GM18951 (cell line): ENCODE measurements at regions of chr6 and their contacts with region 1.

Region 1: DNA sequence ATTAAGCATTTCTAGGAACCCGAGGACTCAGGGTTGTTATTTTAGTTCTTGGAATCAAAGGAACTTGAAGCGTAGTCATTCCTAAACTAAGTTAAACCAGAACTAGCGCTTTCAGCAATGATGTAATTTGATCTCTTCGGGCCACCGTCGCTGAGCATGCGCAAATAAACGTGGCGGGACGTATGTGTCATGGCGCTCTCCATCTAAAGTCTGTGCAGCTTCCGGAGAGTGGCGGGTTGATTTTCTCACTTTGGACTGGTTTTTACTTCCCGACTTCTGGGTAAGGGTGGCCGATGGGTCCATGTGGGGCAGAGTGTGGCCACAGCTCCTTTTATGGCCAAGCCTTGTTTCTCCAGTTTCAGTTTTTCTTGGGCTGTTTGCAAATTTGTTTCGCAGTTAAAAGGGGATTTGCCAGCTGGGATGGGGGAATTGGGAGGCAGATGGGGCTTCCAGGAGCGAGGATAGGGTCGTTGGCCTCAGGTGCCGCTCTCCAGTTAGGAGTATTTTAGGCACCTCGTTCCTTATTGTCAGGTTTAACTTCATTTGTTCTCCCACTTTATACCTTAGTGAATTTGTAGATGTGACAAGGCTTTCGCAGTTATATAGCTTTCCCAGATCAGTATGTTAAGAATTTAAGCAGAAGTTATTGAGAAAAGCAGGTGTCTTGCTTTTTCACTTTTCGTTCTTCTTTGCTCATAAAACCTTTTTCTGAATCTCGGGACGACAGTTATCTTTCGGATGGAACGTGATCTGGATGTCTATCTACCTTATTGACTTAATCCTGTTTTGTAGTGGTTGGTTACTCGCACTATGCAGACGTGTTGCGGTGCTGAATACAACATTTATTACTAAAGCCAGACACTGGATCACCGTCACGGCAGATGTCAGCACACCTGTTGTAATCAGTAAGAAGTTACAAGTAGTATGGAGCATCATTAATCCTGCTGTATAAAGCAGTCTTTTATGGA is at the start of gene CDKAL1:
- POLR2A ChIP-seq: peak; percentile 71

Region 2: DNA sequence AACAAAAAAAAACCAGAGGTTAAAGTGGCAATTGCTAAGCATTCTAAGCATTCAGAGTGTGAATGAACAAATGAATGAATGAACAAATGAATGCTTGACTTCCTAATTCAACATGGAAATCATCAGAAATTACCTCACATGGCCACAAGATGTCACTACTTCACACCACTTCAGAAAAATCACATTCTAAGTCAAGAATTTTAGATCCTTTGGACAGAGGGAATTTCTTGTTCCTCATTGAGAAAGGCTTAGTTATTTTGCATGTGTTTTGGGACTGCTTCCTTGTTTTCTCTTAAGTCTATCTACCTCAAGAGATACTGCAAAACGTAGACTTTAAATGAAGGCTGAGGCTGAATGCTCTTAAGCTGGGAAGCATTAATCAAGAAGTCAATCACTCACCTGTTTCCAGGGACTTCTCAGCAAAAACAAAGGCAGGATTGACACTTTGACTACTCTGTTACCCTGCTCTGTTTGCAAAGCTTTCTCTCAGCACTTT is 442.5 kb before region 1 on chr6:
- in situ Hi-C with region 1: loop called (anchors 10 kb)
- POLR2A ChIP-seq: no peak

Region 3: DNA sequence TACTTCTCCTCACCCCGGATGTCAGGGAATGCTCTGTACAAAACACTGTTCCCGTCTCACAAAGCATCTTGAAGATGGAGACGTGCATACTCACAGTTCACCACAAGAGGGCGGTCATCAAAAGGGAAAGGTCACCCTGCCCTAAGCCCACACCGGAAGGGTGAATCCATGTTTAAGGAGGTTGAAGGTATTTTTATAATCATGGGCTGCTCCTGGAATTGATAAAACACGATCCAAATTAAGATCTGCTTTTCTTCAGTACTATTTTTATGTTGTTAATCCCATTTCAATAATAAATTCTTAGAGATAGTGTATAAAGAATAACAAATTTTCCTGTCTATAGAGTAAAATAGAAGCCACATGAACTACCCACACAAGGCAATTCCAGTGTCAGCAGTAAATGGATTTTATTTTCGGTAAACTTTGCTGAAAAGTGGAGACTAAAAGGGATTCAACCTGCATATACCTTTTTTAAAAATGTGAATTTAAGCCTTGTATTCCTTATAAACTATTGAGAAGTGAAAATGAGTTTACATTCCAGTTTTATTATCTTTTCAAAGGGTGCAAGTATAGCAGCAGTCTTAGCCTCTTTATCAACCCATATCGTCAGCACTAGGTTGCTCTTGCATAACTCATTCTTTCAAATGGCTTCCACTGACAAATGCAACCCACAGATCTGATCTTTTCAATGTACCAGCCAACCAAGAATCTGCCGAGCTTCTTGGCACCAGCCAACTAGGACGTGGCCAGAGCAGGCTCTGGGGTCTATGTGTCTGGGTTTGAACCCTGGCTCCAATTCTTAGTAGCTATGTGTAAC is 242.6 kb before region 1 on chr6:
- in situ Hi-C with region 1: loop called (anchors 5 kb)
- POLR2A ChIP-seq: no peak

Region 4: DNA sequence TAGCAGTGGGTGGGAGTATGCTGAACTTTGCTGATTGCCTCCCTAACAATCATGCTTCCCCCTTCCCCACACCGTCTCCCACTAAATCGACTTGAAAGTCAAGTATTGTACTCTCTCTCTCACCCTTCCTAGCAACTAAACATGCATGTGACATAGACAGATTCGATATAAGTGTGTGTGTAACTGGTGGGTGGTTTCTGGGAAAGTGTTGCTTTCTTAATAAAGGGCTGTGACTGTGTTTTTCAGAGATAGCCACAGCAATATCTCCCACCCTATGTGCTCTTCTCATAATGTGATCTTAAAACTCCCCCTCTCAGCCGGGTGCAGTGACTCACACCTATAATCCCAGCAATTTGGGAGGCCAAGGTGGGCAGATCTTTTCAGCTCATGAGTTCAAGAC is 182.2 kb before region 1 on chr6:
- in situ Hi-C with region 1: no loop called
- POLR2A ChIP-seq: no peak

Region 5: DNA sequence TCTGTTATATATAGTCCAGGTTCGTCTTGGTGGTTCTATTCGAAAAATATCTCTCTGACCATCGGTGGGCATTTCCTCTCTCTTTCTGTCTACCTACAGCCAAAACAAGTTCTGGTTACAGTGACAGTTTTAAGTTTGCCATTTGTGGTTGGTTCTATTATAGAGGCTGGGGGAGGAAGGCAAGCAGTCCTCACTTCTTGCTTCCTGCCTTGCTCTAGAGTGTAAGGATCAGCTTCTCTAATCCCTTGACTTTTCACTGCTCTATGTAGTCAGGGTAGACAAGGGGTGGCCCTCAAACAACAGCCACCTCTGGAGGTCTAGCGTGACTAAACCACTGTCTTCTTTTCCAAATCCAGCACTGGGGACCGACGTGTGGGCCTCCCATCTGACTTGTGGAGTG is 116.8 kb before region 1 on chr6:
- in situ Hi-C with region 1: loop called (anchors 10 kb)
- POLR2A ChIP-seq: no peak

Region 6: DNA sequence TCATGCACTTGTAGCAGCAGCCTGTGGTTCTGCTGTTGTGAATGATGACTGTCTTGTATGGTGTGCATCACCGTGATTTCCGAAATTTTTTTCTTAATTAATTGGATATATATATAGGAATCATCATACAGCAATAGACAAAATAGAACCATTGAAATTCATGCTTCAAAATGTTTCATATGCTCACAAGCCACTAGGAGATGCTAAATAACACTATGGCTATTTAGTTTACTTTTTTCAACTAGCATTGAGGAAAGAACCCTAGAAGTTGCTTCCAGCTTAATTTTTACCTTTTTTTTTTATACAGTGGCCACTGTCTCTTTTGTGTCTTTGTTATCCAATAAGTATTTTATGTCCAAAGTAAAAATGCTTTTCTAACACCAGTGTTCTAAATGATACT is 485.0 kb after region 1 on chr6:
- in situ Hi-C with region 1: no loop called
- POLR2A ChIP-seq: no peak